AG04449 (cell line): ENCODE measurements at regions of chr12 and their contacts with region 1.

Region 1: DNA sequence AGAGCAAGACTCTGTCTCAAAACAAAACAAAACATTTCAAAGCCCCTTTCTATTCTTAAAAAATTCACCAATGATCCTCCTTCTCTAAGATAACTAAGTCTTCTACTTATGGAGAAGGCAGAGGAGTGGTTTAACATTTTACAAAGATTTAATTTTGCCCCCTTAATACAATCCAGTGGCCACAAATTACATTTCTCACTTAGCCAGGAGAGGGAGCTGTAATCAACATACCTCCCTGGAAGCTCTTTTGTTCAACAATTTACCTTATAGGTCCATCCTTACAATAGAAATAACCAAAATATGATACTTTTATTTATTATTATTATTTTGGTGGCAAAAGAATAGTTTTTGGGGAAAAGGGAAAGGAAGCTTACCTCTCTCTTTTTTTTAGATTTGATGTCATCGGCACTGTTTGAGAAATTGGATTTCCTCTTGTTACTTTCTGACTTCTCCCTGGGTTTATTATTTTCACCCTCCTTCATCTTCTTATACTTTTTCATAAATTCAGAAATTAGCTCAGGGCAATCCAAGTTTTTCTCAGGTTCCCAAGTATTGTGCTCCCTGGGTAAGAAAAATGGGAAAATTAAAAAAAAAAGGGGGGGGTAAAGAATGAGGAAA is 28.1 kb downstream of the CBX5 start:
- DNase-seq: no peak
- H3K4me3 ChIP-seq: no peak overlapping the region
- CTCF ChIP-seq: peak; percentile 42

Region 2: GRCh38 chr12:54229624-54230212 is 22.1 kb before region 1 on chr12:
- CTCF ChIA-PET with region 1: interaction called, 209 read pairs
- POLR2A ChIA-PET with region 1: no interaction called
- DNase-seq: peak; percentile 91
- H3K4me3 ChIP-seq: no peak overlapping the region
- CTCF ChIP-seq: no peak

Region 3: DNA sequence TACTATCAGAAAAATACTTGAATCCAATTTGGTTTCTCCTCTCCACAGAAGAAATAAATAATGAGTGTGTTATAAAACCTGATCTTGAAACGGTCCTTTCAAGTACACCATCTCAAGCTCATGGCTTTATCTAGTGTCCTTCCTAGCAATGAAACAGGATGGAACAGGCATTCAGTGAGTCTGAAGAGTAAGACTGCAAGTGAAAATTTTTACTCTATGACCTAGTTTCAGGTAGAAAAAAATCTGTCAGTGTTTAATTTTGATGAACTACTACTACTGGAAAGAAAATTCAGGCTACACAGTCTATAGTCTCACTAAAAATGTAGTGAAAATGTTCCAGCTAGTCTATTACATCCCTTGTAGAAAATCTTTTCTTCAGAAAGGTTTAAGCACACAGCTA is 20.4 kb after region 1 on chr12:
- CTCF ChIA-PET with region 1: interaction called, 12 read pairs
- POLR2A ChIA-PET with region 1: no interaction called
- DNase-seq: no peak
- H3K4me3 ChIP-seq: no peak overlapping the region
- CTCF ChIP-seq: no peak

Region 4: DNA sequence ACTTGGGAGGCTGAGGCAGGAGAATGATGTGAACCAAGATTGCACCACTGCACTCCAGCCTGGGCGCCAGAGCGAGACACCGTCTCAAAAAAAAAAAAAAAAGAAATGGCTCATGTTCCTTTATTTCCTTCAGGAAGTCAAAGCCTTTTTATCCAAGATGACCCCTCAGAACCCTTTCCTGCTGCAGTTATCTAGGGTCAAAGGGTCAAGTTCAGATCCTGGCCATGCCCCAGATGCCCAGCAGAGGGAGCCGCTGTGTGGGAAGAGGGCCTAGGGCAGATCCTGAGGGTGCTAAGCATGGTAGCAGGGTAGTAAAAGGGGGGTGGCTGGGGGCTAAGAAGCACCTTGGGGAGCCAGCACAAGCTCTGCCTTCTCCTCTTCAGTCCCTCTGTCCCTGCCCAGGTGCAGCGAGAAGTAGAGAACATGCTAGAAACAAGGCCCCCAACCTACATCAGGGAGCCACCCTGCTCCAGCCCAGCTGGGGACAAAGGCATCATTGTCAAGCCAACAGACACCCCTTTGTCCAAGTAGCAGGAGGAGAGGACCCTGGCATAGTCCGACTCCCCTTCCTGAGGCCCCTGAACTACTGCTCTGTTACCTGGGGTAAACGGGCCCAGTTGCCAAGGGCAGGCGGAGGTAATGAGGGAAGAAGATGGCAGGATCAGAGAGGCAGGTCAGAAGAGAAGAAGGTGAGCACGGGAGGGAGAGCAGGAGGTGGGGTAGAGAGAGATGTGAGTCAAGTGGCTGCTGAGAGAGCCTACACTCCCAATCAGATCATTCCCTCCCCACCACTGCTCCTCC is 42.6 kb after region 1 on chr12:
- CTCF ChIA-PET with region 1: interaction called, 20 read pairs
- POLR2A ChIA-PET with region 1: no interaction called
- DNase-seq: no peak
- H3K4me3 ChIP-seq: no peak overlapping the region
- CTCF ChIP-seq: peak; percentile 87

Region 5: GRCh38 chr12:54439521-54440255 is 187.9 kb after region 1 on chr12:
- CTCF ChIA-PET with region 1: interaction called, 10 read pairs
- POLR2A ChIA-PET with region 1: no interaction called
- DNase-seq: peak; percentile 71
- H3K4me3 ChIP-seq: no peak overlapping the region
- CTCF ChIP-seq: peak; percentile 68